Naive thymus-derived CD4-positive, alpha-beta T cell (primary cell): ENCODE measurements at regions of chr4 and their contacts with region 1.

Region 1: GRCh38 chr4:109702950-109703663 is at the start of gene CASP6:
- DNase-seq: peak; percentile 64 to 78 (median 75)
- ATAC-seq: peak; percentile 92
- H3K4me3 ChIP-seq: peak within 1 kb of the TSS; percentile 78
- H3K4me3 Mint-ChIP-seq: peak within 1 kb of the TSS; percentile 86 to 96 (median 94)
- H3K27ac ChIP-seq: peak within 1 kb of the TSS; percentile 83
- H3K27ac Mint-ChIP-seq: peak within 1 kb of the TSS; percentile 85 to 95 (median 94)
- H3K4me1 ChIP-seq: peaks cover 8 to 16% of the 10 kb centered on the region in 2 donors
- H3K4me1 Mint-ChIP-seq: peaks cover 20 to 50% (median 48%) of the 10 kb centered on the region in 7 donors
- H3K27me3 ChIP-seq: no peaks in the 10 kb centered on the region
- H3K27me3 Mint-ChIP-seq: no peaks in the 10 kb centered on the region
- total RNA-seq, gene CASP6: 9.3 to 29.9 (median 23.6) TPM

Region 2: DNA sequence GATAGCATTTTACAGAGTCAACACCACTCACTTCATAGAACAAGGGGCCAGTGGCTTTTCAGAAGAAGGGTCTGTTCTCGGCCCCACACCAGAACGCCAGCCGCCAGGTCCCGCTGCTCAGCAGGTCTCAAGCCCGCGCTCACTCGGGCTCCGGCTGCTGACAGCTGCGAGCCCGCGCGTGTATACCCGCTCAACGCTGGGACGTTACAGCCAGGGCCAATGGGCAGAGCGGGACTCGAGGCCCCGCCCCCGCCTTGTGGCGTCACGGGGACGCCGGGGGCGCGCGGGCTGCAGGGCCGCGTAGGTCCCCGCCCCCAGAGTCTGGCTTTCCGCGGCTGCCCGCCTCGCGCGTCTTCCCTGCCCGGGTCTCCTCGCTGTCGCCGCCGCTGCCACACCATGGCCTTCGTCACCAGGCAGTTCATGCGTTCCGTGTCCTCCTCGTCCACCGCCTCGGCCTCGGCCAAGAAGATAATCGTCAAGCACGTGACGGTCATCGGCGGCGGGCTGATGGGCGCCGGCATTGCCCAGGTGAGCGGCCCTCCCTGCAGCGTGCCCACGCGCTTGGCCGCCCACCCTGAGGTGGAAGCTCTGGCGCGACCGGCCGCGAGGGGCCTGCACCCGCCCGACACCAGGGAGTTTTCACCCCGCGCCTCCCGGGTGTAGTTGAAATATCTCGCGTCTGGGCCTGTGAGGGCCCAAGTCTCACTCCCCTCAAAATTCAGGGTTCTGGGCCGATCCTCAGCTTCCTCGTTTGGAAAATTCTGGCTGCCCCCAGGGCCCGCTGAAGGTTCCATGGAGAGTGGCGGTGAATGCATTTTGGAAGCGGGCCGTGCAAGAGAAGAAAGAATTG is 1713.3 kb before region 1 on chr4 and contains the start of gene HADH:
- CTCF ChIA-PET with region 1: no interaction called
- POLR2A ChIA-PET with region 1: no interaction called
- intact Hi-C with region 1: loop called in 1 of 2 experiments (anchors 10 kb)
- DNase-seq: peak; percentile 92 to 98 (median 96)
- ATAC-seq: peak; percentile 100
- H3K4me3 ChIP-seq: peak within 1 kb of the TSS; percentile 57
- H3K4me3 Mint-ChIP-seq: peak within 1 kb of the TSS; percentile 86 to 99 (median 95)
- H3K27ac ChIP-seq: peak within 1 kb of the TSS; percentile 87
- H3K27ac Mint-ChIP-seq: peak within 1 kb of the TSS; percentile 79 to 98 (median 95)
- H3K4me1 ChIP-seq: peaks cover 8 to 37% of the 10 kb centered on the region in 2 donors
- H3K4me1 Mint-ChIP-seq: peaks cover 28 to 85% (median 71%) of the 10 kb centered on the region in 7 donors
- H3K27me3 ChIP-seq: no peaks in the 10 kb centered on the region
- H3K27me3 Mint-ChIP-seq: no peaks in the 10 kb centered on the region
- total RNA-seq, gene HADH: 16.5 to 38.8 (median 29.7) TPM

Region 3: GRCh38 chr4:109424093-109424841 is 278.8 kb before region 1 on chr4:
- CTCF ChIA-PET with region 1: no interaction called
- POLR2A ChIA-PET with region 1: interaction called, 3 read pairs
- intact Hi-C with region 1: loop called (anchors 1 to 2 kb)
- DNase-seq: no peak
- ATAC-seq: no peak
- H3K4me3 ChIP-seq: no peak overlapping the region
- H3K4me3 Mint-ChIP-seq: no peak overlapping the region
- H3K27ac ChIP-seq: no peak overlapping the region
- H3K27ac Mint-ChIP-seq: no peak overlapping the region
- H3K4me1 ChIP-seq: no peaks in the 10 kb centered on the region
- H3K4me1 Mint-ChIP-seq: peaks cover 4 to 7% (median 5%) of the 10 kb centered on the region in 7 donors
- H3K27me3 ChIP-seq: no peaks in the 10 kb centered on the region
- H3K27me3 Mint-ChIP-seq: peaks cover 0 to 10% (median 0%) of the 10 kb centered on the region in 5 donors

Region 4: GRCh38 chr4:109444182-109444844 is 258.8 kb before region 1 on chr4:
- CTCF ChIA-PET with region 1: no interaction called
- POLR2A ChIA-PET with region 1: no interaction called
- intact Hi-C with region 1: no loop called
- DNase-seq: no peak
- ATAC-seq: peak; percentile 29
- H3K4me3 ChIP-seq: no peak overlapping the region
- H3K4me3 Mint-ChIP-seq: peak overlapping the region in 6 of 10 donors; percentile 4 to 52 (median 12)
- H3K27ac ChIP-seq: no peak overlapping the region
- H3K27ac Mint-ChIP-seq: peak overlapping the region in 2 of 9 donors; percentile 14
- H3K4me1 ChIP-seq: peaks cover 18 to 20% of the 10 kb centered on the region in 2 donors
- H3K4me1 Mint-ChIP-seq: peaks cover 52 to 82% (median 82%) of the 10 kb centered on the region in 7 donors
- H3K27me3 ChIP-seq: no peaks in the 10 kb centered on the region
- H3K27me3 Mint-ChIP-seq: no peaks in the 10 kb centered on the region

Region 5: DNA sequence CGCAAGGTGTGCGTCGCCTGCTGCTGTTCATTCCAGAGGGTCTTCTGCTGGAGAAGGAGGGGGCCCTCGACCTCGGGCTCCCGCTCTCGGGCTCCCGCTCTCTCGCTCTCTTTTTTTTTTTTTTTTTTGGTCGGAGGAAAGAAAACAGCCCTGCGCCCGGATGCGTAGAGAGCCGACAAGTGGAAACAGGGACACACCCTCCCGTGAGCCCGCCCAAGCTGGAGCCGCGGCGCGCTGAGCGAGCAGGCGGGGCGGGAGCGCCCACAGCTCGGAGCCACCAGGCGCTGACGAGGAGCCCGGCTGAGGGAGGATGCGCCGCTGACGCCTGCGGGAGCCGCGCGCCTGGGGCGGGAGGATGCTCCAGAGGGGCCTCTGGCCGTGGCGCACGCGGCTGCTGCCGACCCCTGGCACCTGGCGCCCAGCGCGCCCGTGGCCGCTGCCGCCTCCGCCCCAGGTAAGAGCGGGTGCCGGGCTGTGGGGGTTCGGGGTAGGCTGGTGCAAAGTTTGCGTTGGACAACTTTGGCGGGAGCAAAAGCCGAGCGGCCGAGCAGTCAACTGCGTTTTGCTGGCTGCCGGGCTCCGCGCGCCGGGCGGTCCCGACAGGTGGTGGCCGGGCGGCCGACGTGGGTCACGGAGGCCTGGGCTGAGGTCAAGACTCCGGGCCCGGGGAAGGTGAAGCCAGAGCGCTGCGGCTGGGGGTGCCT is 143.0 kb before region 1 on chr4 and contains the start of gene MCUB:
- CTCF ChIA-PET with region 1: no interaction called
- POLR2A ChIA-PET with region 1: interaction called, 18 read pairs
- intact Hi-C with region 1: loop called (anchors 1 kb)
- DNase-seq: peak; percentile 80 to 95 (median 93)
- ATAC-seq: peak; percentile 96
- H3K4me3 ChIP-seq: peak within 1 kb of the TSS; percentile 83
- H3K4me3 Mint-ChIP-seq: peak within 1 kb of the TSS; percentile 89 to 100 (median 98)
- H3K27ac ChIP-seq: peak within 1 kb of the TSS; percentile 96
- H3K27ac Mint-ChIP-seq: peak within 1 kb of the TSS; percentile 90 to 100 (median 98)
- H3K4me1 ChIP-seq: peaks cover 25 to 41% of the 10 kb centered on the region in 2 donors
- H3K4me1 Mint-ChIP-seq: peaks cover 34 to 76% (median 58%) of the 10 kb centered on the region in 7 donors
- H3K27me3 ChIP-seq: no peaks in the 10 kb centered on the region
- H3K27me3 Mint-ChIP-seq: no peaks in the 10 kb centered on the region
- total RNA-seq, gene MCUB: 83.4 to 177 (median 114) TPM

Region 6: GRCh38 chr4:109611045-109611646 is 92.0 kb before region 1 on chr4:
- CTCF ChIA-PET with region 1: no interaction called
- POLR2A ChIA-PET with region 1: no interaction called
- intact Hi-C with region 1: no loop called
- DNase-seq: no peak
- ATAC-seq: no peak
- H3K4me3 ChIP-seq: no peak overlapping the region
- H3K4me3 Mint-ChIP-seq: peak overlapping the region in 2 of 10 donors; percentile 42 to 64
- H3K27ac ChIP-seq: no peak overlapping the region
- H3K27ac Mint-ChIP-seq: peak overlapping the region in 2 of 9 donors; percentile 21 to 36
- H3K4me1 ChIP-seq: peaks cover 0 to 12% of the 10 kb centered on the region in 2 donors
- H3K4me1 Mint-ChIP-seq: peaks cover 39 to 96% (median 84%) of the 10 kb centered on the region in 7 donors
- H3K27me3 ChIP-seq: no peaks in the 10 kb centered on the region
- H3K27me3 Mint-ChIP-seq: no peaks in the 10 kb centered on the region

Region 7: DNA sequence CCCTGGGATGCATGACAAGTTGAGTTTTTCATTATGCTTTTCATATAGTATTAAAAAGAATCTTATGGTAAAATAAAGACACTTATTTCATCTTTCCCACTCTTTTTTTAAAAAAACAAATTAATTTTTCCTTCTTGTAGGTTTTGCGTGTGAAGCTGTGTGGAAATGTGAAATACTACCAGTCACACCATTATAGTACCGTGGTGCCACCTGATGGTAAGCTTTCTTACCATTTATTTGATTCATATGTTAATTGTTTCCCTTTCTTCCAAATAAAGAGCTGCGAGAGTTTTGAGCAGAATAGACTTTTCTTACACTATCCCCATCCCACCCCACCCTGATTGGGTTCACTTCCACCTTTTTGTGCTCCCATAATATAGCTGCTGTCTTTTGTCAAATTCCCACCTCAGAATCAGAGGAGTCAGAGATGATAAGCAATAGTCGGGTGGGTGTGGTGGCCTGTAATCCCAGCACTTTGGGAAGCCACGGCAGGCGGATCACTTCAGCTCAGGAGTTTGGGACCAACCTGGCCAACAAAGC is 44.2 kb before region 1 on chr4:
- CTCF ChIA-PET with region 1: no interaction called
- POLR2A ChIA-PET with region 1: no interaction called
- intact Hi-C with region 1: no loop called
- DNase-seq: peak in 5 of 9 donors; percentile 26 to 47 (median 31)
- ATAC-seq: peak; percentile 54
- H3K4me3 ChIP-seq: no peak overlapping the region
- H3K4me3 Mint-ChIP-seq: peak overlapping the region in 5 of 10 donors; percentile 14 to 66 (median 44)
- H3K27ac ChIP-seq: peak overlapping the region; percentile 38
- H3K27ac Mint-ChIP-seq: peak overlapping the region in 7 of 9 donors; percentile 59 to 83 (median 76)
- H3K4me1 ChIP-seq: peaks cover 0 to 32% of the 10 kb centered on the region in 2 donors
- H3K4me1 Mint-ChIP-seq: peaks cover 15 to 78% (median 58%) of the 10 kb centered on the region in 7 donors
- H3K27me3 ChIP-seq: no peaks in the 10 kb centered on the region
- H3K27me3 Mint-ChIP-seq: no peaks in the 10 kb centered on the region

Region 8: DNA sequence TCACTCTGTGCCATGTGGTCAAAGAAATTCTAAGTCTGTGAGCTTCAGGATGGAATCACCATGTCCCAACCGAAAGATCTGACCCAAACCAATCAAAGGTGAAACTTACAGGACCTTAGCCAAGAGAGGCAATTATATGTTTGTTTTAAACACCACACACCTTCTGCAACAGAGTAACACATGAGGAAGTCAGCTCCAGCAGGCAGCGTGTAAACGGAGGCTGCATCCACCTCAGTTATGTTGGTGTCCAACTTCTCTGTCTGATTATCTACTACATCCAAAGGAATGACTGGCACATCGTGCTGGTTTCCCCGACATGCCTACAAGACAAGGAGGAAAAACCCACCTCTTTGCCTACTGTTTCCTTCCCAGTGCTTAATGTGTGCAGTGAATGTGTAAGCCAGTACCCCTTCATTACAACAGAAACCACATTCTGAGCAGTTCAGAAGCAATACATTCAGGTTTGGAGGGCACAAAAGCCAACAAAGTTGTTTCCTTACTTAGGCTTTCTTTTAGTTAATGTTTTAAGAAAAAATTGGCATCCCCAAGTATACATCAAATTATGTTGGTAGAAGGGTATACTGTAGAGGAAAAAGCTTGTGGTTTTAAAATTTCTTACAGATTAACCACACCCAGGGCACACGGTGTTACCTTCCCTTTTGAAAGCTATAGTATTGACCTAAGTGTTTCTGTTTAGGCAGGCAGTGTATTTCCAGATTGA is 12.3 kb before region 1 on chr4:
- CTCF ChIA-PET with region 1: interaction called, 7 read pairs
- POLR2A ChIA-PET with region 1: interaction called, 7 read pairs
- intact Hi-C with region 1: loop called (anchors 1 to 2 kb)
- DNase-seq: peak in 7 of 9 donors; percentile 16 to 55 (median 31)
- ATAC-seq: peak; percentile 85
- H3K4me3 ChIP-seq: no peak overlapping the region
- H3K4me3 Mint-ChIP-seq: peak overlapping the region; percentile 40 to 79 (median 64)
- H3K27ac ChIP-seq: peak overlapping the region; percentile 42
- H3K27ac Mint-ChIP-seq: peak overlapping the region; percentile 59 to 90 (median 87)
- H3K4me1 ChIP-seq: peaks cover 17 to 23% of the 10 kb centered on the region in 2 donors
- H3K4me1 Mint-ChIP-seq: peaks cover 17 to 62% (median 40%) of the 10 kb centered on the region in 7 donors
- H3K27me3 ChIP-seq: no peaks in the 10 kb centered on the region
- H3K27me3 Mint-ChIP-seq: no peaks in the 10 kb centered on the region

Region 9: GRCh38 chr4:109754093-109754857 is 51.2 kb after region 1 on chr4:
- CTCF ChIA-PET with region 1: no interaction called
- POLR2A ChIA-PET with region 1: no interaction called
- intact Hi-C with region 1: no loop called
- DNase-seq: peak in 6 of 9 donors; percentile 10 to 53 (median 36)
- ATAC-seq: peak; percentile 10
- H3K4me3 ChIP-seq: no peak overlapping the region
- H3K4me3 Mint-ChIP-seq: no peak overlapping the region
- H3K27ac ChIP-seq: no peak overlapping the region
- H3K27ac Mint-ChIP-seq: peak overlapping the region in 3 of 9 donors; percentile 21 to 48 (median 29)
- H3K4me1 ChIP-seq: no peaks in the 10 kb centered on the region
- H3K4me1 Mint-ChIP-seq: no peaks in the 10 kb centered on the region
- H3K27me3 ChIP-seq: no peaks in the 10 kb centered on the region
- H3K27me3 Mint-ChIP-seq: peaks cover 0 to 13% (median 6%) of the 10 kb centered on the region in 5 donors

Region 10: GRCh38 chr4:109826719-109827118 is 123.6 kb after region 1 on chr4:
- CTCF ChIA-PET with region 1: no interaction called
- POLR2A ChIA-PET with region 1: interaction called, 3 read pairs
- intact Hi-C with region 1: loop called (anchors 1 kb)
- DNase-seq: peak in 6 of 9 donors; percentile 14 to 46 (median 27)
- ATAC-seq: peak; percentile 73
- H3K4me3 ChIP-seq: no peak overlapping the region
- H3K4me3 Mint-ChIP-seq: no peak overlapping the region
- H3K27ac ChIP-seq: no peak overlapping the region
- H3K27ac Mint-ChIP-seq: no peak overlapping the region
- H3K4me1 ChIP-seq: no peaks in the 10 kb centered on the region
- H3K4me1 Mint-ChIP-seq: peaks cover 0 to 3% (median 0%) of the 10 kb centered on the region in 7 donors
- H3K27me3 ChIP-seq: no peaks in the 10 kb centered on the region
- H3K27me3 Mint-ChIP-seq: no peaks in the 10 kb centered on the region